ENCODE measurements at regions of chr1 and their contacts with region 1.

Region 1: DNA sequence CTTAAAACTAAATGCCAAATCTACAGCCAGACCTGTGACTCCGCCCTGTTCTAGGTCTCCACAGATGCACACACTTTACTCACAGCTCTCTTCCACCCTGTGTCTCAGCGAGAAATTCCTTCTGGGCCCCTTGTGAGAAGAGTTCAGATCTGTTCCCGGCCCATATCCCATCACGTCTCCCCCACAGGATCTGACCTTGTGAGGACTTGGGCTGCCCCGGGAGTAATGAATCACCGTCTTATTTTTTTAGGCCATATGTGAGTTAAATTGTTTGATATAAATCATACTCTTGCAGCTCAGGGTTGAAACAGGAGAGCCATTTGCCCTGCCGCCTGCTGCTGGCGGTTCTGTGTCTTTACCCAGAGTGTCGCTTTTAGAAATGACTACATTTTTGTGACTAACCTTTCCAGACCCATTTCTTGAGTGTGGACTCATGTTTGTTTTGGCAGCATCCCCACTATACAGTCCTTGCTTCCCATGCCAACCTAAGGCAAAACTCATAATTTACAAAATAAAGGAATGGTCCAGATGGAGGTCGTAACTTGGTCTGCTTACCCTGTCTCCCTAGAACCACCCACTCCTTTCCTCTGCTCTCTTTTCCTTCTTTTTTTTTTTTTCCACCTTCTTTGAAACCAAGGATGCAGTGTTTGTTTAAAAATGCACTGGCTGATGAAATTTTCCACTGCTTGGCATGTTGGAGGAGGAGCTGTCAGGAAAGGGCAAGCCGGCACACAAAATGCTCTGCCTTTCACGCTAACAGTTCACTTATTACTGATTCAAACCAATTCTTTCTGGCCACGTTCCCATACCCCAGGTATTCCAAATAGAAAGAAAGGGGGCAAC is 98.0 kb upstream of the C1orf105 start:
- DNase-seq: peak in 1 of 2 experiments; percentile 45
- H3K4me3 ChIP-seq: no peak overlapping the region
- H3K27ac ChIP-seq: no peak overlapping the region
- H3K4me1 ChIP-seq: peaks cover 9% of the 10 kb centered on the region
- H3K27me3 ChIP-seq: no peaks in the 10 kb centered on the region
- CTCF ChIP-seq: no peak

Region 2: GRCh38 chr1:172165403-172165802 is 157.0 kb before region 1 on chr1:
- CTCF ChIA-PET with region 1: no interaction called
- POLR2A ChIA-PET with region 1: interaction called, 19 read pairs
- intact Hi-C with region 1: no loop called
- DNase-seq: no peak
- H3K4me3 ChIP-seq: no peak overlapping the region
- H3K27ac ChIP-seq: no peak overlapping the region
- H3K4me1 ChIP-seq: no peaks in the 10 kb centered on the region
- H3K27me3 ChIP-seq: no peaks in the 10 kb centered on the region
- CTCF ChIP-seq: no peak

Region 3: DNA sequence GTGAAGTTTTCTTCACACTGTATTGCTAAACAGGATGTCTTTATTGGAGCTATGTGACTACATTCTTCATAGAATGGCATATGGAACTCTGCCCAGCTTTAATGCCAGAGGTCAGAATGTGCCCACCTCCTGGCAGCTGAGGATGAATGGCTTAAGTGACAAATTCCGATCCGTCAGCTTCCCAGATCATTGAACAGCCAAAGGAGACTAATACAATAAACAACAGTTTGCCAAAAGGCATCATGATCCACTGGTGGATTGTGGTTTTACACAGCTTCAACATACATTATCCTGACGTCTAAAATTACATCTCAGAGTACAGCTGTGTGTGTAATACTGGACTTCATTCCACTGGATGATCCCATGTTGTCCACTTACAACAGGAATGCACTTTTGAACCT is 29.3 kb after region 1 on chr1:
- CTCF ChIA-PET with region 1: no interaction called
- POLR2A ChIA-PET with region 1: no interaction called
- intact Hi-C with region 1: loop called (anchors 1 kb)
- DNase-seq: peak; percentile 54 to 82
- H3K4me3 ChIP-seq: no peak overlapping the region
- H3K27ac ChIP-seq: peak overlapping the region; percentile 62
- H3K4me1 ChIP-seq: peaks cover 42% of the 10 kb centered on the region
- H3K27me3 ChIP-seq: no peaks in the 10 kb centered on the region
- CTCF ChIP-seq: no peak

Measured in PC-9 (cell line).